ENCODE measurements at regions of chr19 and their contacts with region 1.

Region 1: GRCh38 chr19:43463381-43464136 is 1.8 kb downstream of the LYPD3 start:
- DNase-seq: peak; percentile 85
- ATAC-seq: peak; percentile 87
- H3K4me3 ChIP-seq: peak overlapping the region; percentile 70 to 84 (median 73)
- H3K27ac ChIP-seq: peak overlapping the region; percentile 64
- H3K4me1 ChIP-seq: peaks cover 52% of the 10 kb centered on the region
- H3K27me3 ChIP-seq: no peaks in the 10 kb centered on the region
- CTCF ChIP-seq: no peak
- EP300 ChIP-seq: no peak
- POLR2A ChIP-seq: peak in 1 of 2 experiments; percentile 47; a peak in 2 of 4 replicates
- RAD21 ChIP-seq: 0 out of 2 replicates have a peak, but pooled peaks have one; percentile 17

Region 2: GRCh38 chr19:43474986-43475705 is 11.6 kb after region 1 on chr19:
- CTCF ChIA-PET with region 1: no interaction called
- POLR2A ChIA-PET with region 1: interaction called, 17 read pairs
- in situ Hi-C with region 1: no loop called
- intact Hi-C with region 1: no loop called
- DNase-seq: no peak
- ATAC-seq: no peak
- H3K4me3 ChIP-seq: no peak overlapping the region
- H3K27ac ChIP-seq: no peak overlapping the region
- H3K4me1 ChIP-seq: no peaks in the 10 kb centered on the region
- H3K27me3 ChIP-seq: no peaks in the 10 kb centered on the region
- CTCF ChIP-seq: no peak
- EP300 ChIP-seq: no peak
- POLR2A ChIP-seq: no peak
- RAD21 ChIP-seq: no peak

Region 3: DNA sequence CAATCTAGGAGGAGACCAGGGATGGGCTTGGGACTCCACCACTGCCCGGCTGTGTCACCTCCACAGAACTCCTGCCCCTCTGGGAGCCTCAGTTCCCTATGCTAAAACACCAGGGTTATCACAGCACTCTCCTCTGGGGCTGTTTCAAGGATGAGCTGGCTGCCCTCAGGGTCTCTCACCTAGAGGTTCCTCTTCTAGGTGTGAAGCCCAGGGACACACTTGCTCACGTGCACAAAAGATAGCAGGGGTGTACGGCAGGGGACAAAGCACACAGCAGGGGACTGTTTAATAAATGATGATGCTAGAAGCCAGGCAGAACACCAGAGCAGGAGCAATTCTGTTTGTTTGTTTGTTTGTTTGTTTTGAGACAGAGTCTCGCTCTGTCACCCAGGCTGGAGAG is 18.6 kb after region 1 on chr19:
- CTCF ChIA-PET with region 1: no interaction called
- POLR2A ChIA-PET with region 1: interaction called, 17 read pairs
- in situ Hi-C with region 1: no loop called
- intact Hi-C with region 1: no loop called
- DNase-seq: no peak
- ATAC-seq: no peak
- H3K4me3 ChIP-seq: no peak overlapping the region
- H3K27ac ChIP-seq: no peak overlapping the region
- H3K4me1 ChIP-seq: no peaks in the 10 kb centered on the region
- H3K27me3 ChIP-seq: no peaks in the 10 kb centered on the region
- CTCF ChIP-seq: no peak
- EP300 ChIP-seq: no peak
- POLR2A ChIP-seq: no peak
- RAD21 ChIP-seq: no peak

Region 4: DNA sequence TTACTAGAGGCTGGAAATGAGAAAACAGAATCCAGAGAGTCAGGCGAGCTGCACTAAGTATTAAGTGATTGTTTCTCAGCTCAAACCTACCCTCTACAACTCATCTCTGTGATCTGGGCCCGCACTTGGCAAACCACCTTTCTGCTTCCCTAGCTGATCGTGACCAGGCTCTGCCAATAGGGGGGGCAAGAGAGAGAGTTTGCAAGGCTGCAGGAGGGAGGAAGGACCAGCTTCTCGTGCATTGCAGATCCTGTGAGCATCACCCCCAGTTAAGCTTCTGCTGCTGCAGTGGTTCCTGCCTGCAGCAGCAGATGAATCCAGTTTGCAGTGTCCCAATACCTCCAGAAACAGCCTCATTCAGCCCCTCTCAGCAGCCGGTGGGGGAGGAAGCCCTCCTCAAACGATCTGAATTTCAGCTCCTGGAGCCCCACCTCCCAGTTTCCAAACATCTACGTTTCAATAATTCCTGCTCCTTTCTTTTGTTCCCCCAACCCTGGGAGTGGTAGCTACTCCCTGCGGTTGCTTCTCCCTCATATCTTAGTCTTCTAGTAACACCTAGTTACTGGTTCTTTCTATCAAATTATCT is 91.7 kb after region 1 on chr19:
- CTCF ChIA-PET with region 1: no interaction called
- POLR2A ChIA-PET with region 1: no interaction called
- in situ Hi-C with region 1: no loop called
- intact Hi-C with region 1: no loop called
- DNase-seq: peak; percentile 62
- ATAC-seq: peak; percentile 88
- H3K4me3 ChIP-seq: no peak overlapping the region
- H3K27ac ChIP-seq: no peak overlapping the region
- H3K4me1 ChIP-seq: no peaks in the 10 kb centered on the region
- H3K27me3 ChIP-seq: no peaks in the 10 kb centered on the region
- CTCF ChIP-seq: peak; percentile 84
- EP300 ChIP-seq: no peak
- POLR2A ChIP-seq: no peak
- RAD21 ChIP-seq: 0 out of 2 replicates have a peak, but pooled peaks have one; percentile 36